RWPE1 (cell line): ENCODE measurements at regions of chr5 and their contacts with region 1.

Region 1: DNA sequence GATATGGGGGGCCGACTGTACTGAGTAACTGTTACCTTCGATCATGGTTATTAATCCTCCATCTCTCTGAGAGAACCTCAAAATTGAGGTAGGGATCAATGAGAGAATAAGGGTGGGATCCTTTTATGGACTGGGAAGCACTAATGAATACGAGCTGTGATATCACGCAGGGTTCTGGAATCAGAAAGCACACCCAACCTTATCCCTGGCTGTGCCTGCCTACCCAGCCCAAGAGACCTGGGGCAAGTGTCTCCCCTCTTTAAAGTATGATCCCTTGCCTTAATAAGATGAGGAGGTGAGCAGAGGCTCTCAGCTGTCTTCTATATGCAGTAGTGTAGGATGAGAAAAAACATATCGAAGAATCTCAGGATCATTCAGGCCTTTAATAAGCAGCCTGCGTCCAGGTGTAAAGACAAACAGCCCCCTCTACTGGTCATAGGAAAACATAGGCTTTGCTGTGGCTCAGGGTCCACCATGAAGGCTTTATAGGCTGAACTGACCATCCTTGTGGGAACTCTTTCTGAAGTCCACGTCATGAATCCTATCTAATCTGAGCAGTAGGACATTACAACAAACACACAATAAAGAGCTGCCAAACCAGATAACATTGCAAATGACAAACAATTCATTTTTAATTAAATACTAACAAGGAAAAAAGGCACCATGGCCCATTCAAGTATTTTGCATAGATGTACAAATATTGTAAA is 16.8 kb downstream of the NIPAL4 start:
- DNase-seq: peak; percentile 88
- H3K27ac ChIP-seq: no peak overlapping the region
- CTCF ChIP-seq: peak; percentile 92

Region 2: DNA sequence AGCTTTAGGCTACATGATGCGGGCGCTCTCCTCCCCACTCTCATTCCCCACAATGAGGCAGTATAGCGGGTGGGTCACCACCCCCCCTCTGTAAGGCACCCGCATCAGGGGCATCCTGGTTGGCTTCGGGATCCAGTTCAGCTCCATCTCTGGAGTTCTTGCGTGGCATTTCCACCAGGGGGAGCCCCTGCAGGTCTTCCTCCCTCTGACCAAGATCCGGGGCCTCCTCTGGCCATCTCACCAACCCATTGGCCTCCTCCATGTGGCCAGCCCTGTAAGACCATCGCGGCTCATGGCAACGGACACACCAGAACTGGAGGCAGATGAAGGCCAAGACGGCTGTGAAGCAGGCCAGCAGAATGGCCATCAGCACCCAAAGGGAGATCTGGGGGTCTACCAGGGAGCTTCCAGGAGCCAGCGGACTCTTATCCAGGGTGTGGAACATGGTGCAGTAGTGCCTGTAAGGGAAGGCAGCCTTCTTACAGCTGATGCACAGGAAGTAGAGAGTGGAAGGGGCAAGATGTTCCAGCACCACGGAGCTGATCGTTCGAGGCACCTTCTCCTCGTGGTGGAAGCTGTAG is 133.9 kb before region 1 on chr5:
- CTCF ChIA-PET with region 1: interaction called, 10 read pairs
- POLR2A ChIA-PET with region 1: no interaction called
- DNase-seq: peak; percentile 64
- H3K27ac ChIP-seq: no peak overlapping the region
- CTCF ChIP-seq: peak; percentile 55

Region 3: DNA sequence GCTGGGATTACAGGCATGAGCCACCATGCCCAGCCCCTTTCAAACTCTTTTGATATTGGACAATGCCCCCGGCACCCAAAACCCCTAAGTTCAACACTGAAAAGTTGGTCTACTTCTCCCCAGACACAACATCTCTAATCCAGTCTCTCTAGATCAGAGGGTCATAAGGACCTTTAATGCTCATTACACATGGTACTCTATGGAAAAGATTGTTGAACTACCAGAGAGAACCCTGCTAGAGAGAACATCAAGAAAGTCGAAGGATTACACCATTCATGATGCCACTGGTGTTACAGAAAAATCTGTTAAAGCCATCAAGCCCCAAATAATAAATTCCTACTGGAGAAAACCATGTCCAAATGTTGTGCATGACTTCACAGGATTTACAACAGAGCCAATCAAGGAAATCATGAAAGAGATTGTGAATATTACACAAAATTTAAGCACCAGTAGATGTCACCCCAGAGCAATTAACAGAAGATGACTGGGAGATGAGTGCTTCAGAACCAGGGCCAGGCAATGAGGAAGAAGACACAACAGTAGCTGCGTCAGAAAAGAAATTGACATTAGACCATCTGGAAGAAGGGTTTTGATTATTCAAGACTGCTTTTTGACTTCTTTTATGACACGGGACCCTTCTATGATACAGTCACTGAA is 45.2 kb before region 1 on chr5:
- CTCF ChIA-PET with region 1: interaction called, 22 read pairs
- POLR2A ChIA-PET with region 1: no interaction called
- DNase-seq: peak; percentile 54
- H3K27ac ChIP-seq: no peak overlapping the region
- CTCF ChIP-seq: peak; percentile 71